ENCODE measurements at regions of chr15 and their contacts with region 1.

Region 1: DNA sequence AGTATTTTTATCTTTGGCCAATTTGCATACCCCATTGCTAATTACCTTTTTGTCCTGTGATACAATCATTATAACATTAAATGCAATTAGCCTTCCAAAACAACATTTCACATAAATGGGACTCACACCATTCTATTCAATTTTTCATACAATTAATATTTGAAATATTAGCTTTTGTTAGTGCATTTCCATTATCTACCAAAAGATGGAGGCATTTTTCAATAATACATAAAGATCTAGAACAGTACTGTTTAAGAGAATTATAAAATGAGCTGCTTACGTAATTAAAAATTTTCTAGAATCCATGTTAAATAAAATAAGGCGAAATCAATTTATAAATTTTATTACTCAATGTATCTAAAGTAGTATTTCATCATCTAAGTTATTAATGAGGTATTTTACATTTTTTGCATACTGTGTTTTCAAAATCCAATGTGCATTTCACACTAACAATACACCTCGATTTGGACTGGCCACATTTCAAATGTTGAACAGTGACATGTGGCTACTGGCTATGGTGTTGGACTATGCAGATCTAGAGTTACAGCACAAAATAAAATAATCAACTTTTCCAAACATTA is 74.3 kb downstream of the TJP1 start:
- DNase-seq: no peak
- ATAC-seq: no peak
- H3K4me3 ChIP-seq: no peak overlapping the region
- H3K27ac ChIP-seq: no peak overlapping the region
- H3K4me1 ChIP-seq: peaks cover 0 to 15% (median 6%) of the 10 kb centered on the region in 12 donors
- H3K27me3 ChIP-seq: no peaks in the 10 kb centered on the region
- CTCF ChIP-seq: peak in 11 of 12 donors; percentile 26 to 67 (median 50)
- POLR2A ChIP-seq: no peak

Region 2: DNA sequence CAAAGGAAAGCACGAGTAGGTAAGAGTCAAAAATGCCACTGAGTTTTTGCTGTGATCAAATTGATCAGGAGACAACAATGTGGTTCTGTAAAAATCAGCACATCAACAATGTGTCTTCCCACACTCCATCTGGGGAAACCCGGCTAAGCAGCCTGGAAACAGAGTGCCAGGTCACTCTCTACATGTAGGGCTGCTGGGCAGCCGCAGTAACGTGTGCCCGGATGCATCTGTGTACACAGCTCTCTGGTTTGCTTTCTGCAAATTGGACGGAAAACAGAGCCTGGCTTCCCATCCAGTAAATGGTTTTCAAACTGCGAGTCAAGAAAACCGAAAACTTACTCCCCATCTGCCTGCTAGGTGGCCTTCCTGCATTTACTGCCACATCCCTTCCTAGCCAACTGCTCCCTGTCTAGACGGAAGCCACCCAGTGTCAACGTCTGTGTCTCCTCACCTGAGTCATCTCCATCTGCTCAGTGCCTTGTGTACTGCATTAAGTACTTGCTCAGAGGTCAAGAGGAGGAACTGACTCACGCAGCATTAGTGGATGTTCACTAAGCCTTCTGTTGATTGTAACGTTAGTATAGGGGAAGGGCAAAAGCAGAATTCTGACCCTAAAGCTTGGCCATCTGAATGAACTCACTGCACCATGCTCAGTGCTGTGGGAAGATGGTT is 49.8 kb before region 1 on chr15:
- intact Hi-C with region 1: loop called in 1 of 10 experiments (anchors 10 kb)
- DNase-seq: no peak
- ATAC-seq: peak in 1 of 4 donors; percentile 13
- H3K4me3 ChIP-seq: no peak overlapping the region
- H3K27ac ChIP-seq: no peak overlapping the region
- H3K4me1 ChIP-seq: no peaks in the 10 kb centered on the region
- H3K27me3 ChIP-seq: no peaks in the 10 kb centered on the region
- CTCF ChIP-seq: no peak
- POLR2A ChIP-seq: no peak

Region 3: DNA sequence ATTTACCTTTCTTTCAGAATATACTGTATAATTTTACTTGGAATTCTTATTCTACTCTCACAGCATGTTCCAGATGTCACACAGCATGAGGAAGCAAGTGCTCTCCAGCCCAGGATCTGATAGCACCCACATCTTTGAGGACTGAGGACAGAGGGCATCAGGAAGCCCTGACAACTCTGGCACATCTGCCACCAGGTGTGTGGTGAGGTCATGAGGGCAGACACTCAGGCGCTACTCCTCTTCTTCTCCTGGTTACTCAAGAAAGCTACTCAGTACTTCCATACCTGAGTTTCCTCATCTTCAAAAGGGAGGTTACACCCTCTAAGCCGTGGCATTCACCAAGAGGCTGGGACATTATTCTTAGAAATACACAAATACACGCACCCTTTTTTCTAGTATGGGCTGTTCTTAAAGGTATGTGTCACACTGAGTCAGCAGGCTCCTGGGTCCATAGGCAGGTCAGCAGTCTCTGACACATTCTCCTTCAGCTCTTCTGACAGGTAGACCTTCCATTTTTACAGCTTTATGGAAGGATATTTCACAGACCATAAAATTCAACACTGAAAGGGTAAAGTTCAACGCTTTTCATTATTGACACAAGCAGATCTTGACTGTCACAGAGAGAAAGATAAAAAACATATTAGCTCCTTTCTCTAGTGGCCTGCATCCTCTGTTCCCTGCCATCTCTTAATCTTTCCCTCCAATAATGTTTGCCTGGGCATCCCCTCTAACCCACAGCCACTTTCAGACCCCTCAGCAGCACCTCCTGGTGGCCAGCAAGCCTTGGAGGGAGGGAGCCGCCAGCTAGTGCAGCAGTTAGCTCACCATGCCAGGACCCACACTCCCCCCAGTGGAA is 177.5 kb after region 1 on chr15:
- intact Hi-C with region 1: loop called in 9 of 10 experiments (anchors 2 to 5 kb)
- DNase-seq: peak; percentile 81 to 85 (median 82)
- ATAC-seq: peak; percentile 95 to 98 (median 96)
- H3K4me3 ChIP-seq: no peak overlapping the region
- H3K27ac ChIP-seq: peak overlapping the region in 7 of 12 donors; percentile 1 to 58 (median 31)
- H3K4me1 ChIP-seq: peaks cover 0 to 22% (median 15%) of the 10 kb centered on the region in 12 donors
- H3K27me3 ChIP-seq: no peaks in the 10 kb centered on the region
- CTCF ChIP-seq: peak; percentile 77 to 96 (median 88)
- POLR2A ChIP-seq: no peak

Measured in heart left ventricle (tissue), 16 donors.